ENCODE measurements at regions of chr1 and their contacts with region 1.

Region 1: GRCh38 chr1:178542560-178543356 is 29.8 kb downstream of the TEX35 start:
- DNase-seq: peak; percentile 81
- H3K4me3 Mint-ChIP-seq: peak overlapping the region; percentile 88
- H3K27ac Mint-ChIP-seq: peak overlapping the region; percentile 80
- H3K4me1 Mint-ChIP-seq: no peaks in the 10 kb centered on the region
- H3K27me3 Mint-ChIP-seq: no peaks in the 10 kb centered on the region

Region 2: DNA sequence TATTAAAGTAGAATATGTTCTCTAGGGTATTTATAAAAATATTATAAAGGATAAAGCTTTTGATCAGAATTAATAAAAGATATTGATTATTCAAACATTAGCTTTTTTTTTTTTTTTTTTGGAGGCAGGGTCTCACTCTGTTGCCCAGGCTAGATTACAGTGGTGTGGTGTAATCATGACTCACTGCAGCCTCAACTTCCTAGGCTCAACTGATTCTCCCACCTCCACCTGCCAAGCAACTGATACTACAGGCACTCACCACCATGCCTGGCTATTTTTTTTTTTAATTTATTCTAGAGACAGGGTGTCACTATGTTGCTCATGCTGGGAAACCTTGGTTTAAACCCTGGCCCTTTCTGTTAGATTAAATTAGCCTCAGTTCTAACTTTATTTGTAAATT is 234.3 kb before region 1 on chr1:
- intact Hi-C with region 1: no loop called
- DNase-seq: no peak
- H3K4me3 Mint-ChIP-seq: no peak overlapping the region
- H3K27ac Mint-ChIP-seq: no peak overlapping the region
- H3K4me1 Mint-ChIP-seq: no peaks in the 10 kb centered on the region
- H3K27me3 Mint-ChIP-seq: peaks cover 4% of the 10 kb centered on the region

Region 3: DNA sequence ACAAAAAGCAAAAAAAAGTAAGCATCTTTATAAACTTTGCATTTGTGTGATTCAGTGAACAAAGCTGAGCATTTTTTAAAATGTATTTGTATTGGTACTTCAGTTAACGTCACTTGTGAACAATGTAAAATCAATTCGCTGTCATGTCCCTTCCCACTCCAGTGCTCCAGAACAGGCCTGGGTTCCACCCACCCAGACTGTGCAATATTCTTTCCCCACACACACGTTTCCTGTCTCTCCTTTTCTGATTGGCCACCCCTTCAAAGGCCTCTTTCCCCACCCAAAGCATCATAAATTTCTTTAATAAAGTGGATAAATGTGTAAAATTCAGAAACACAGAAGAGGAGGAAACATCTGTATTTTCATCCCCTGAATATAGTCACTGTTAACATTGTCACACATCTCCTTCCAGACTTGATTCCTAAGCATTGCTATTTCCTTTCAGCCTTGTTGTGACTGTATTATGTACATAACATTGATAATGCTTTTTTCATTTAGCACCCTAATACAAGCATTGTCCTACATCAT is 58.0 kb before region 1 on chr1:
- intact Hi-C with region 1: no loop called
- DNase-seq: no peak
- H3K4me3 Mint-ChIP-seq: no peak overlapping the region
- H3K27ac Mint-ChIP-seq: no peak overlapping the region
- H3K4me1 Mint-ChIP-seq: no peaks in the 10 kb centered on the region
- H3K27me3 Mint-ChIP-seq: peaks cover 23% of the 10 kb centered on the region

Region 4: GRCh38 chr1:178566187-178566586 is 23.4 kb after region 1 on chr1:
- intact Hi-C with region 1: loop called (anchors 1 kb)
- DNase-seq: no peak
- H3K4me3 Mint-ChIP-seq: no peak overlapping the region
- H3K27ac Mint-ChIP-seq: no peak overlapping the region
- H3K4me1 Mint-ChIP-seq: no peaks in the 10 kb centered on the region
- H3K27me3 Mint-ChIP-seq: peaks cover 5% of the 10 kb centered on the region

Region 5: GRCh38 chr1:178749581-178750166 is 206.9 kb after region 1 on chr1:
- intact Hi-C with region 1: loop called (anchors 1 kb)
- DNase-seq: no peak
- H3K4me3 Mint-ChIP-seq: no peak overlapping the region
- H3K27ac Mint-ChIP-seq: no peak overlapping the region
- H3K4me1 Mint-ChIP-seq: no peaks in the 10 kb centered on the region
- H3K27me3 Mint-ChIP-seq: no peaks in the 10 kb centered on the region

Region 6: DNA sequence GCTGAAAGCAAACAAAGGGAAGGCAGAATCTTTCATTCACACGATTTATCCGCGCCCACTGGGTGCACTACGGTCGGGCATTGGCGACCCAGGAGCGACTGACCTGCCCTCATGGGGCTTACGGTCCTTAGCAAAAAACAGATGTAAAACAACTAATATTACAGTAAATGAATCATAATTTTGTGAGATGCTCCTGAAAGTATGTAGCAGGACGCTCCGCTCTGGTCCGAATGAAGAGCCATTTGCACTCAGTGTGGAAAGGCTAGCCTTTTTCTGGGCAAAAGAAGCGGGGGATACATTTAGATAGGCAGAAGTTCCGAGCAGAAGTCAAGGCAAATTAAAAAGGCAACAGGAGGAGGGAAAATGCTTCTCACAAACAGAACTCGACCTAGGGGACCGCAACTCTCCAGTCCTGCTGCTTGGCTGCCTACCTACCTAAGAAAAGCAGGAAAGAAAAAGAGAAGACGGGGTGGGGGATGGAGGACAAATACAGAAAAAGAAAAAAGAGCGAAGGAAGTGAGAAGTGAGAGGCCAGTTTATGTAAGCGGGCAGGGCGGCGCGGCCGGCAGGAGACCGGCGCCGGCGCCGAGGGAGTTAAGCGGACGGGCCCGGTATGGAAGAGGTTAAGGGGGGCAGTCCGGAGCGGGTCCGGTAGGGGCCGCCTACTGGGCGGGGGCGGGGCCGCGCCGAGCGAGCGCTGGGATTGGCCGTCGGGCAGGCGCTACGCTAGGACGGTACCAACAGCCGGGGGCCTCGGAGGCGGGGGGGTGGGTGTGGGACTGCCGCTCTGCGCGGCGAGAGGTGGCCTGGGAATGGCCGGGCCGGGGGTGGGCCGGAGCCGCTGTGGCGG is 482.6 kb after region 1 on chr1 and contains the start of gene FAM20B:
- intact Hi-C with region 1: loop called (anchors 1 kb)
- DNase-seq: peak; percentile 86
- H3K4me3 Mint-ChIP-seq: peak within 1 kb of the TSS; percentile 89
- H3K27ac Mint-ChIP-seq: peak within 1 kb of the TSS; percentile 82
- H3K4me1 Mint-ChIP-seq: peaks cover 43% of the 10 kb centered on the region
- H3K27me3 Mint-ChIP-seq: peaks cover 18% of the 10 kb centered on the region
- total RNA-seq, gene FAM20B: 36.6 and 39.2 TPM in 2 replicates

Region 7: GRCh38 chr1:179293340-179294327 is 750.9 kb after region 1 on chr1 and contains the start of gene SOAT1:
- intact Hi-C with region 1: loop called (anchors 2 kb)
- DNase-seq: peak; percentile 88
- H3K4me3 Mint-ChIP-seq: peak within 1 kb of the TSS; percentile 99
- H3K27ac Mint-ChIP-seq: peak within 1 kb of the TSS; percentile 96
- H3K4me1 Mint-ChIP-seq: peaks cover 41% of the 10 kb centered on the region
- H3K27me3 Mint-ChIP-seq: no peaks in the 10 kb centered on the region
- total RNA-seq, gene SOAT1: 48.7 and 49.0 TPM in 2 replicates

Measured in activated T-helper 1 cell treated with anti-CD3 and anti-CD28 coated beads, Interleukin-12 subunit alpha, Interleukin-12 subunit beta, Interleukin-2, Interleukin-4 antibody, amounts not matched to agents 30 ng/mL and 10 ng/mL and 1 ng/mL, durations not matched to agents 14 hours and 24 hours and 36 hours (primary cell).